ENCODE measurements at regions of chr1 and their contacts with region 1.

Region 1: DNA sequence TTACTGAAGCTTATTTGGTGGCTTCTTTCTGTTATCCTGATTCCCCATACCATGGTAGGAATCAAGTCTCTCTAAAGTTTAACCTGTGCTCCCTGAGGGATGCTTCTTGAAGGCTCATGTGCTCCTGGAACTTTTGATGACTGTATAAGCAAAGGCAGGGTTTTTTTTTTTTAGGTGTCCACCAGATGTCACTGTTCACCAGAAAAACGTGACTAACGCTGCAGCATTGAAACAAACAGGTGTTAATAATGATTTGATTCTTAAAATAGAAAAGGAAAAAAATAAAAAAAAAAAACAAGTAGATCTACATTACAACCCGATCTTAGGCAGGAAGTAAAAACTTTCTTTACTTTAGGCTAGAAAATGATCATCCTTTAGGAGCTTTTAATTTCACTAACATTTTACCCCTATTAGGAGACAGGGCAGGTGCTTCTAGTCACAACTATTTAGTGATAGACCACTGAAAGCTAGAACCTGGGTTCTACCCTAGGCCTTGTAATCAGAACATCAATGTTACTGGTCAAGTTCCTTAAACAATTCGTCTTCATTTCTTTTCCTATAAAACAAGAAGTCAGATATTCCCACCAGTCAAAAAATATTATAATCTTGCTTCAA is 223.0 kb downstream of the PLA2G4A start:
- DNase-seq: peak; percentile 62
- H3K4me3 ChIP-seq: no peak overlapping the region
- H3K27ac ChIP-seq: no peak overlapping the region
- H3K4me1 ChIP-seq: no peaks in the 10 kb centered on the region
- H3K27me3 ChIP-seq: no peaks in the 10 kb centered on the region
- CTCF ChIP-seq: peak; percentile 28 to 33
- POLR2A ChIP-seq: no peak

Region 2: DNA sequence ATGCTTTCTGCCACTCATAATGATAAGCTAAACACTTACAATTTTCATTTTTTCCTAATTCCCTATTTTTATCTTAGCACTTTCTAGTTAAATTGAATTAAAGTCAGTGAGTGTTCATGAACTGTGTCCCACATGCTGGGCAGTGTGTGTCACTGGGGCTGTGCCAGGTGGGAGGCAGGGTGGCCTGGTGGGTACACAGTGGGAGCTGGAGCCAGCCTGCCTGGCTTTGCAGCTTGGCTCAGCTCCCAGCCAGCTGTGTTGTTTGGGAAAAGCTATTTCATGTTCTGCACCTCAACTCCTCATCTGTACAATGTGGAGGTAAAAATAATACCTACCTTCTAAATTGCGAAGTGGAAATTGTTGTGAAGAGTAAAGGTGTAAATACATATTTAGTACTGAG is 15.4 kb after region 1 on chr1:
- CTCF ChIA-PET with region 1: interaction called, 21 read pairs
- POLR2A ChIA-PET with region 1: no interaction called
- dilution Hi-C with region 1: no loop called
- intact Hi-C with region 1: no loop called
- DNase-seq: no peak
- H3K4me3 ChIP-seq: no peak overlapping the region
- H3K27ac ChIP-seq: no peak overlapping the region
- H3K4me1 ChIP-seq: no peaks in the 10 kb centered on the region
- H3K27me3 ChIP-seq: peaks cover 0 to 2% of the 10 kb centered on the region in 2 experiments
- CTCF ChIP-seq: no peak
- POLR2A ChIP-seq: no peak

Region 3: DNA sequence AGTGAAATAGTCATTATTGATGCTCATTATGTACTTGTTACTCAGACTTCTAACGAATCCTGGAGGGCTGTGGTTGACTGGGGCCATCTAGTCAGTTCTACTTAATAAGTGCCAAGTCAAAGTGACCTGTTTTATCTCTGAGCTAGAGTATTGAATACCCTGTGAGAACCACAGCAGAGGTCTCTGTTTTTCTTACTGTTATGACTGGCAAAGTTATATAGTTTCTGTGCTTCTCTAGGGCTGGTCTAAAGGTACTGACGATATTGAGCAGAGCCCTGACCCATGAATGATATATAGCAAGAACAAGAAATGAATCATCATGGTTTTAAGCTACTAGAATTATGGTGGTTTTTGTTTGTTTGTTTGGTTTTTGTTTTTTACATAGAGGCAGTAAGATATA is 332.8 kb after region 1 on chr1:
- CTCF ChIA-PET with region 1: no interaction called
- POLR2A ChIA-PET with region 1: no interaction called
- dilution Hi-C with region 1: no loop called
- intact Hi-C with region 1: loop called (anchors 10 kb)
- DNase-seq: no peak
- H3K4me3 ChIP-seq: no peak overlapping the region
- H3K27ac ChIP-seq: no peak overlapping the region
- H3K4me1 ChIP-seq: no peaks in the 10 kb centered on the region
- H3K27me3 ChIP-seq: no peaks in the 10 kb centered on the region
- CTCF ChIP-seq: no peak
- POLR2A ChIP-seq: no peak